ENCODE measurements at regions of chr11 and their contacts with region 1.

Region 1: DNA sequence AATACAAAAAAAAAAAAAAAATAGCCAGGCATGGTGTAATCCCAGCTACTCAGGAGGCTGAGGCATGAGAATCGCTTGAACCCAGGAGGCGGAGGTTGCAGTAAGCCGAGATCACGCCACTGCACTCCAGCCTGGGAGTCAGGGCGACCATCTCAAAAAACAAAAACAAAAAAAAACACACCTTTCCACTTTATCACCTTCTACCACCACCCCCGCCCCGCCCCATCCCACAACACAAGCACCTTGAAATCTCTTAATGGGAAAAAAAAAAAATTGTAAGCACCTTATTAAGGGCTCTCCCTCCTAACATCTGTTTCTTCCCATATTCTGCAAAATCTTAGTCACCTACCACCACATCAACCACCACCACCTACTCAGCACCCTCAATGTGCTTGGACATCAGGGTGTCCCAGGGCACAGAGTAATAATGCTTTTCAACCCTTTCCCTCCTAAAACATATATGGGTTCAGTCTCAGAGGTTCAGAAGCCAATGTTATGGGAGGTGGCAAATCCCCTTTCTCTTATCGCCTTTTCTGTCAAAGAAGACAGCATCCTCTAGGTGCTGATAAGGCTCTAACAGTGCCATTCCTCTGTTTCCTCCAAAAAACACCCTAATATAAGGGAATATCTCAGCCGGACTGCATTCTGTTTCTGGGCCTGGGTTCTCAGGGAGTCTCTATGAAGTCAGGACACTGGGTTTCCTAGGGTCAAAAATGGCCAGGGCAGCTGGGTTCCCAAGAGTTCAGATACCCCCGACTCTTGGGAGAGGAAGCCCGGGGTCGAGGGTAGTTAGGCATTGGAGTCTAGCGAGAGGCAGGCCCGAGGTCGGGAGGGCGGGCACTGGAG is 718 bp downstream of the INTS5 start:
- DNase-seq: peak in 4 of 9 donors; percentile 13 to 59 (median 22)
- ATAC-seq: no peak
- H3K4me3 ChIP-seq: peak overlapping the region; percentile 87
- H3K4me3 Mint-ChIP-seq: peak overlapping the region; percentile 75 to 94 (median 90)
- H3K27ac ChIP-seq: peak overlapping the region; percentile 95
- H3K27ac Mint-ChIP-seq: peak overlapping the region; percentile 88 to 98 (median 96)
- H3K4me1 ChIP-seq: peaks cover 13 to 16% of the 10 kb centered on the region in 2 donors
- H3K4me1 Mint-ChIP-seq: peaks cover 11 to 36% (median 22%) of the 10 kb centered on the region in 7 donors
- H3K27me3 ChIP-seq: no peaks in the 10 kb centered on the region
- H3K27me3 Mint-ChIP-seq: no peaks in the 10 kb centered on the region

Region 2: GRCh38 chr11:62573592-62574362 is 78.6 kb before region 1 on chr11 and contains the start of gene EEF1G:
- CTCF ChIA-PET with region 1: no interaction called
- POLR2A ChIA-PET with region 1: no interaction called
- intact Hi-C with region 1: loop called in 1 of 2 experiments (anchors 1 kb)
- DNase-seq: peak; percentile 88 to 100 (median 99)
- ATAC-seq: peak; percentile 96
- H3K4me3 ChIP-seq: peak within 1 kb of the TSS; percentile 82
- H3K4me3 Mint-ChIP-seq: peak within 1 kb of the TSS; percentile 94 to 100 (median 97)
- H3K27ac ChIP-seq: peak within 1 kb of the TSS; percentile 88
- H3K27ac Mint-ChIP-seq: peak within 1 kb of the TSS; percentile 81 to 98 (median 95)
- H3K4me1 ChIP-seq: peaks cover 8 to 11% of the 10 kb centered on the region in 2 donors
- H3K4me1 Mint-ChIP-seq: peaks cover 39 to 61% (median 45%) of the 10 kb centered on the region in 7 donors
- H3K27me3 ChIP-seq: no peaks in the 10 kb centered on the region
- H3K27me3 Mint-ChIP-seq: no peaks in the 10 kb centered on the region
- total RNA-seq, gene EEF1G: 1,186 to 2,550 (median 2,338) TPM

Region 3: DNA sequence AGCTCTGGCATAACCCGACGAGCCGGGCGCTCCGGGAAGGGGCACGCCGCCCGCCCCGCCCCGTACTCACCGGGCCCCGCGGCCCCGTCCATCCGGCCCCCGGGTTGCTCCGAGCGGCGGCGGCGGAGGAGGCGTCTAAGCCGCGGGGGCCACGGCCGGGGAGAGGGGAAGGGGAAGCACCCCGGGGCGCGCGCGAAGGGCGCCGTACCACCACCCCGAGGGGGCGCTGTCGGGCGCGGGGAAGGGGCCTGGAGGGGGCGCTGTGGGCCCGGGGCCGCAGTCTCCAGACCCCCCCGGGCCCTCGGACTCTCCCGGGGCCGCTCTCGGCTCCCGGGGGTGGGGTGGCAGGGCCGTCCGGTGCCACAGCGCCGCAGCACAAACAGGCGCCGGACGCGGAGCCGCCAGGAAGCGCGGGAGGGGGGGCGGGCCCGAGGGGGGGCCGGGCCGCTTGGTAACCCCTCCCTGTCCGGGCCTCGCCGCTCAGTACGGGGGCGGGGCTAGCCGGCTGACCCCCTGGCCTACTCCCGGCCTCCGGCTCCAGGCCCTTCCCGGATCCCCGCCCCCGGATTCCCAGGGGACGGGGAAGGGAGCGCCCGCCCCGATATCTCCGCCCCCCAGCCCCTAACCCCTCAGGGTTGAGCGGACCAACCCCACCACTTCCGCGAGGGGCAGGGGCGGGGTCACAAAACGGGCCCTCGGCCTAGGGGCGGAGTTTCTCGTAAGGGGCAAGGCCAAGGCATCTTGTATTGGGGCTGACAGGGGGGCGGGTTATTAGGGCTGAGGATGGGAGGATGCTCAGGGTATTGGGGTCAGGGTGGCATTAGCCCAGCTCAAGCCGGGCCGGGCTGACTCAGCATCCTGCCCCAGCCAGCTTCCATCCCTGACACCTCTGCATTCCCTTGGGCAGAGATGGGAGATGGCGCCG is 39.8 kb before region 1 on chr11 and contains the starts of genes EML3 and ROM1:
- CTCF ChIA-PET with region 1: interaction called, 6 read pairs
- POLR2A ChIA-PET with region 1: interaction called, 15 read pairs
- intact Hi-C with region 1: loop called in 1 of 2 experiments (anchors 2 kb)
- DNase-seq: peak; percentile 74 to 96 (median 83)
- ATAC-seq: peak; percentile 90
- H3K4me3 ChIP-seq: peak within 1 kb of the TSS; percentile 99
- H3K4me3 Mint-ChIP-seq: peak within 1 kb of the TSS; percentile 89 to 100 (median 96)
- H3K27ac ChIP-seq: peak within 1 kb of the TSS; percentile 92
- H3K27ac Mint-ChIP-seq: peak within 1 kb of the TSS; percentile 93 to 100 (median 97)
- H3K4me1 ChIP-seq: peaks cover 19 to 32% of the 10 kb centered on the region in 2 donors
- H3K4me1 Mint-ChIP-seq: peaks cover 31 to 56% (median 48%) of the 10 kb centered on the region in 7 donors
- H3K27me3 ChIP-seq: no peaks in the 10 kb centered on the region
- H3K27me3 Mint-ChIP-seq: no peaks in the 10 kb centered on the region
- total RNA-seq, gene EML3: 152 to 209 (median 188) TPM
- total RNA-seq, gene ROM1: 1.2 to 2.4 (median 2.0) TPM

Region 4: GRCh38 chr11:62621567-62622470 is 30.6 kb before region 1 on chr11 and contains the start of gene B3GAT3:
- CTCF ChIA-PET with region 1: no interaction called
- POLR2A ChIA-PET with region 1: interaction called, 34 read pairs
- intact Hi-C with region 1: no loop called
- DNase-seq: peak; percentile 87 to 97 (median 94)
- ATAC-seq: peak; percentile 93
- H3K4me3 ChIP-seq: peak within 1 kb of the TSS; percentile 97
- H3K4me3 Mint-ChIP-seq: peak within 1 kb of the TSS; percentile 91 to 99 (median 94)
- H3K27ac ChIP-seq: peak within 1 kb of the TSS; percentile 92
- H3K27ac Mint-ChIP-seq: peak within 1 kb of the TSS; percentile 92 to 99 (median 96)
- H3K4me1 ChIP-seq: peaks cover 11% of the 10 kb centered on the region in 2 donors
- H3K4me1 Mint-ChIP-seq: peaks cover 13 to 29% (median 26%) of the 10 kb centered on the region in 7 donors
- H3K27me3 ChIP-seq: no peaks in the 10 kb centered on the region
- H3K27me3 Mint-ChIP-seq: no peaks in the 10 kb centered on the region
- total RNA-seq, gene B3GAT3: 55.8 to 78.1 (median 71.2) TPM

Region 5: DNA sequence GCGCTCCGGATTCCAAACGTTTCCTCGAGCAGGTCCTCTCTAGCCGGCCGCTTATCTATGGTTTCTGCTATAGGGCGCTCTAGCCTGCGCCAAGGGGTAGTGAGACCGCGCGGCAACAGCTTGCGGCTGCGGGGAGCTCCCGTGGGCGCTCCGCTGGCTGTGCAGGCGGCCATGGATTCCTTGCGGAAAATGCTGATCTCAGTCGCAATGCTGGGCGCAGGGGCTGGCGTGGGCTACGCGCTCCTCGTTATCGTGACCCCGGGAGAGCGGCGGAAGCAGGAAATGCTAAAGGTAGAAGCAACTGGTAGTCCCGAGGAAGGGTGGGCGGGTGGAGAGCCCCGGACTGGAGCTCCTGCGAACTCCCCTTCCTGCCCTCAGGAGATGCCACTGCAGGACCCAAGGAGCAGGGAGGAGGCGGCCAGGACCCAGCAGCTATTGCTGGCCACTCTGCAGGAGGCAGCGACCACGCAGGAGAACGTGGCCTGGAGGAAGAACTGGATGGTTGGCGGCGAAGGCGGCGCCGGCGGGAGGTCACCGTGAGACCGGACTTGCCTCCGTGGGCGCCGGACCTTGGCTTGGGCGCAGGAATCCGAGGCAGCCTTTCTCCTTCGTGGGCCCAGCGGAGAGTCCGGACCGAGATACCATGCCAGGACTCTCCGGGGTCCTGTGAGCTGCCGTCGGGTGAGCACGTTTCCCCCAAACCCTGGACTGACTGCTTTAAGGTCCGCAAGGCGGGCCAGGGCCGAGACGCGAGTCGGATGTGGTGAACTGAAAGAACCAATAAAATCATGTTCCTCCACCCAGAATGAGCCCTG is 19.4 kb after region 1 on chr11 and contains the starts of genes LBHD1 and UQCC3:
- CTCF ChIA-PET with region 1: interaction called, 9 read pairs
- POLR2A ChIA-PET with region 1: interaction called, 332 read pairs
- intact Hi-C with region 1: loop called (anchors 2 kb)
- DNase-seq: peak; percentile 49 to 80 (median 73)
- ATAC-seq: peak; percentile 85
- H3K4me3 ChIP-seq: peak within 1 kb of the TSS; percentile 62
- H3K4me3 Mint-ChIP-seq: peak within 1 kb of the TSS; percentile 94 to 100 (median 99)
- H3K27ac ChIP-seq: peak within 1 kb of the TSS; percentile 90
- H3K27ac Mint-ChIP-seq: peak within 1 kb of the TSS; percentile 91 to 97 (median 96)
- H3K4me1 ChIP-seq: peaks cover 12 to 25% of the 10 kb centered on the region in 2 donors
- H3K4me1 Mint-ChIP-seq: peaks cover 12 to 62% (median 51%) of the 10 kb centered on the region in 7 donors
- H3K27me3 ChIP-seq: no peaks in the 10 kb centered on the region
- H3K27me3 Mint-ChIP-seq: no peaks in the 10 kb centered on the region
- total RNA-seq, gene LBHD1: 13.8 to 26.4 (median 20.8) TPM
- total RNA-seq, gene UQCC3: 2.2 to 8.2 (median 5.8) TPM

Region 6: GRCh38 chr11:62678770-62679696 is 26.6 kb after region 1 on chr11 and contains the start of gene UBXN1:
- CTCF ChIA-PET with region 1: no interaction called
- POLR2A ChIA-PET with region 1: interaction called, 332 read pairs
- intact Hi-C with region 1: loop called (anchors 1 to 2 kb)
- DNase-seq: peak; percentile 63 to 84 (median 81)
- ATAC-seq: peak; percentile 91
- H3K4me3 ChIP-seq: peak within 1 kb of the TSS; percentile 87
- H3K4me3 Mint-ChIP-seq: peak within 1 kb of the TSS; percentile 86 to 93 (median 90)
- H3K27ac ChIP-seq: peak within 1 kb of the TSS; percentile 98
- H3K27ac Mint-ChIP-seq: peak within 1 kb of the TSS; percentile 88 to 98 (median 94)
- H3K4me1 ChIP-seq: peaks cover 13 to 15% of the 10 kb centered on the region in 2 donors
- H3K4me1 Mint-ChIP-seq: peaks cover 19 to 41% (median 37%) of the 10 kb centered on the region in 7 donors
- H3K27me3 ChIP-seq: no peaks in the 10 kb centered on the region
- H3K27me3 Mint-ChIP-seq: no peaks in the 10 kb centered on the region
- total RNA-seq, gene UBXN1: 114 to 215 (median 207) TPM

Region 7: GRCh38 chr11:63404161-63404935 is 752.0 kb after region 1 on chr11:
- CTCF ChIA-PET with region 1: no interaction called
- POLR2A ChIA-PET with region 1: no interaction called
- intact Hi-C with region 1: no loop called
- DNase-seq: no peak
- ATAC-seq: no peak
- H3K4me3 ChIP-seq: no peak overlapping the region
- H3K4me3 Mint-ChIP-seq: no peak overlapping the region
- H3K27ac ChIP-seq: no peak overlapping the region
- H3K27ac Mint-ChIP-seq: no peak overlapping the region
- H3K4me1 ChIP-seq: no peaks in the 10 kb centered on the region
- H3K4me1 Mint-ChIP-seq: peaks cover 0 to 5% (median 0%) of the 10 kb centered on the region in 7 donors
- H3K27me3 ChIP-seq: peaks cover 0 to 8% of the 10 kb centered on the region in 2 donors
- H3K27me3 Mint-ChIP-seq: peaks cover 10 to 25% (median 18%) of the 10 kb centered on the region in 5 donors